ENCODE measurements at regions of chr17 and their contacts with region 1.

Region 1: DNA sequence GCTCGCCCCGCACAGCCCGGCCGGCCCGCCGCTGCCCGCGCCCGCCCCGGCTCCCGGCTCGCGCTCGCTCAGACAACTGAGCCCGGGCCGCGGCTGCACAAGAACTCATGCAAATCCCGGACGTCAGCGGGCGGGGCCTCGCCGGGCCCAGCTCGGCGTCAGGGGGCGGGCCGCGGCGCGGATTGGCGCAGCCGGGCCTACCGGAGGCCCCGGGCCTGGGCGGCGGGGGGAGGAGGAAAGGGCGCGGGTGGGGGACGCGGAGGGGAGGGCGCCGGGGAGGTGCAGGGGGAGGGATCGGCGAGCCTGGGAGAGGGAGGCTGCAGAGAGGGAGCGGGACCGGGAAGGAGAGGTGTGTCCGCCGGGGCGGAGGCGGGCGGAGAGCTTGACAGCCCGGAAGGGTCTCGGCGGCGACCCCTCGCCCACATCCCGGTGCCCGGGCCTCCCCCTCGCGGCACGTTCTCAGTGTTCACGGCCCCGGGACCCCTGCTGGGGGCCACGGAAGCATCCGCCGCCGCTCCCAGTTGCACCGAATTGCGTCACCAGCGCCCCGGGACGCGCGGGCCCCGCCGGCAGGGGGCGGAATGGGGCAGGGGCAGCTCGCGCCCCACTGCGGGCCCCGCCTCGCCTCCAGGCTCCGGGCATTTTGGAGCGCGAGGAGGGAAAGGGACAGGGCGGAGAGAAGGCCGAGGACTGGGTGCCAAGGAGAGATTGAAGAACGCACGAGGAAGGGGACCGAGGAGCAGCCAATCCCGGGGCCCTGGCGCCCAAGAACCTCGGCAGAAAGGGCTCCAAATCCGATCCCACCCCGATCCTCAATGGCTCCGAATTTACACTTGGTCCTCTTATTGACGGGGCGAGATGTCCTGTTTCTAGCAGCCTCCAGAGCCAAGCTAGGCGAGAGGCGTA is at the start of gene CBX4:
- DNase-seq: peak; percentile 82 to 94 (median 88)
- H3K4me3 ChIP-seq: peak within 1 kb of the TSS; percentile 85
- H3K4me3 Mint-ChIP-seq: peak within 1 kb of the TSS; percentile 94 to 100 (median 97)
- H3K27ac ChIP-seq: peak within 1 kb of the TSS; percentile 89
- H3K27ac Mint-ChIP-seq: peak within 1 kb of the TSS; percentile 88 to 100 (median 96)
- H3K4me1 ChIP-seq: peaks cover 67% of the 10 kb centered on the region
- H3K4me1 Mint-ChIP-seq: peaks cover 32 to 71% (median 40%) of the 10 kb centered on the region in 3 donors
- H3K27me3 ChIP-seq: peaks cover 44% of the 10 kb centered on the region
- H3K27me3 Mint-ChIP-seq: peaks cover 33 to 35% of the 10 kb centered on the region in 2 donors
- total RNA-seq, gene CBX4: 9.8 to 12.2 TPM

Region 2: DNA sequence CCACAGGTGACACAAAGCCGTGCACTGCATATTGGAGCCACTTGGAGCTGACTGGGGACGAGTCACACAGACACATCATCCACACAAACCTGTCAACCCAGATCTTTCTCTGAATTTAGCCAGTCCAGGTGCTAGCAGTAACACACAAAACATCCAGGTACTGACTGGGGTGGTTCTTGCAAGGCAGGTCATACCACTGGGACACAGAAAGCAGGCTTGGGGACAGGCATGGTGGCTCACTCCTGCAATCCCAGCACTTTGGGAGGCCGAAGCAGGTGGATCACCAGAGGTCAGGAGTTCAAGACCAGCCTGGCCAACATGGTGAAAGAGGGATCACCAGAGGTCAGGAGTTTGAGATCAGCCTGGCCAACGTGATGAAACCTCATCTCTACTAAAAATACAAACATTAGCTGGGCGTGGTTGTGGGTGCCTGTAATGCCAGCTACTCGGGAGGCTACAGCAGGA is 93.9 kb before region 1 on chr17:
- CTCF ChIA-PET with region 1: interaction called, 8 read pairs
- POLR2A ChIA-PET with region 1: interaction called, 13 read pairs
- DNase-seq: peak in 1 of 5 donors; percentile 22
- H3K4me3 ChIP-seq: no peak overlapping the region
- H3K4me3 Mint-ChIP-seq: peak overlapping the region in 6 of 7 donors; percentile 13 to 57 (median 53)
- H3K27ac ChIP-seq: no peak overlapping the region
- H3K27ac Mint-ChIP-seq: peak overlapping the region in 2 of 8 donors; percentile 11 to 60
- H3K4me1 ChIP-seq: peaks cover 23% of the 10 kb centered on the region
- H3K4me1 Mint-ChIP-seq: peaks cover 6 to 22% (median 12%) of the 10 kb centered on the region in 3 donors
- H3K27me3 ChIP-seq: peaks cover 15% of the 10 kb centered on the region
- H3K27me3 Mint-ChIP-seq: peaks cover 38 to 41% of the 10 kb centered on the region in 2 donors

Region 3: DNA sequence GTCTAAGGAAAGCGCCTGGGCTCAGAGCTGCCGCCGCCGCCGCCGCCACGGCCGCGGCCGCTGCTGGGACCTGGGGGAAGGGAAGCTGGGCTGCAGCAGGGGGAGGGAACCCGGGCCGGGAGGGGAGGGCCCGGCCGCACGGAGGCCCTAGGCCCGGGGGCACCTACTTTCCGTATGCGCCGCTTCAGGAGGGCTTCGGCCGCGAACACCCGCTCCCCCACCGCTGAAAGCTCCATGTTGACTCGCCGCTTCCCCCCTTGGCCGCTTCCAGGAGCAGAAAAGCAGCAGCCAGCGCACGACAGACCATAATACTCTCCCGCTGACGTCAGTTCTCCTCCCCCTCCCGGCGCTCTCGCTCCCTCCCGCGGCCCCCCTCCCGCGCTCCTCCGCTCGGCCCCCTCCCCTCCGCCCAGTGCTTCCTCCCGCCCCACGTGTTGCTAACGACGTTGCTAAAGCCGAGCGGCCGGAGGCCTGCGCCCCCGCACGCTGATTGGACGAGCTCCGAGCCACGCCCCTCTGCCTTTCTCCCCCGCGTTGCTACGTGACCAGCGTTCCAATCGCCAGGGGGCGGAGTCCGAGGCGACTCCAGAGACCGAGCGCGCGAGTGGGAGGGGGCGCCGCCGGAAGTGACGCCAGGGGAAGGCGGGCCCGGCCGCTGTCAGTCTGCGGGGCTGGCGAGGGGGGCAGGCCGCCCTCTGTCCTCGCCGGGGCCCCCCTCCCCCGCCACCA is 42.7 kb before region 1 on chr17 and contains the start of gene CBX8:
- CTCF ChIA-PET with region 1: interaction called, 14 read pairs
- POLR2A ChIA-PET with region 1: interaction called, 79 read pairs
- DNase-seq: peak; percentile 97 to 99 (median 98)
- H3K4me3 ChIP-seq: peak within 1 kb of the TSS; percentile 80
- H3K4me3 Mint-ChIP-seq: peak within 1 kb of the TSS; percentile 85 to 92 (median 86)
- H3K27ac ChIP-seq: peak within 1 kb of the TSS; percentile 73
- H3K27ac Mint-ChIP-seq: peak within 1 kb of the TSS; percentile 50 to 94 (median 88)
- H3K4me1 ChIP-seq: peaks cover 50% of the 10 kb centered on the region
- H3K4me1 Mint-ChIP-seq: peaks cover 31 to 52% (median 34%) of the 10 kb centered on the region in 3 donors
- H3K27me3 ChIP-seq: peaks cover 44% of the 10 kb centered on the region
- H3K27me3 Mint-ChIP-seq: peaks cover 43 to 45% of the 10 kb centered on the region in 2 donors
- total RNA-seq, gene CBX8: 1.9 to 2.2 TPM

Region 4: DNA sequence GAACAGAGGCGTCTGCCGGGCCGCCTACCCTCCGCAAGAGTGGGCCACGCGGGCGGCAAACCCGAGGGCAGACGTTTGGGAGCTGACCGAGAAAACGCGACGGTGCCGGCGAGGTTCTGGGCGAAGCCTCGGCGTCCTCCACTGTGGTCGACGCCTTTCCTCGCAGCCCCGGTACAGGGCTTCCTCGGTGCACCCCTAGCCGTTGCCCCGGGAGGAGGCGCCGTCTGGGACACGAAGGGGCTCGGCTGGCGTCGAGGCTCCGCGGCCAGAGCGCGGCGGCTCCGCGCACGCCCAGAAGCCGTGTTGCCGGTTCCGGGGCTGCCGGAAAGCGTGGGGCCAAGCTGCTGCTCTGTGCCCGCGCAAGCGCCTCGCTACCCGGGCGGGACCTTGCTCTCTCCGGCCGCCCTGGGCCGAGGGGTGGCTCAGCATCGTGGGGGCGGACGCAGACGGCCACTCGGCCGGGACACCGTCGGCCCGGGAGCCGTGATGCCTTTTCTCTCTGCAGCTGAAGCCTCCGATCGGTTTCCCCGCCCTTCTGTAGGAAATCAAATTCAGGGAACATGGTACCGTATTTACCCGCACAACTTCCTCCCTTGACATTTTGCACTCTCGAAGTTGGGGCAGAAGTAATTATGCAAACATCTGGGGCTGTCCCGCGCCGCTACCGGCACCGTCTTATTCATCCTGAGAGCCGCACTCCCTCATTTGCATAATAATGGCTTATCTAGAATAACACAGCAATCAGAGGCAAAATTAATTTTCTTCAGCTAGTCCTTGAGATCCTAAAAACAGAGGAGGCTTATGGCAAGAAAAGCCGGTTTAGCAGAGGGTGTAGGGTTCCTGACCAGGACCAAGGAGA is 35.4 kb before region 1 on chr17:
- CTCF ChIA-PET with region 1: interaction called, 14 read pairs
- POLR2A ChIA-PET with region 1: interaction called, 79 read pairs
- DNase-seq: peak in 1 of 5 donors; percentile 42
- H3K4me3 ChIP-seq: no peak overlapping the region
- H3K4me3 Mint-ChIP-seq: peak overlapping the region; percentile 42 to 75 (median 62)
- H3K27ac ChIP-seq: no peak overlapping the region
- H3K27ac Mint-ChIP-seq: peak overlapping the region in 6 of 8 donors; percentile 40 to 93 (median 60)
- H3K4me1 ChIP-seq: peaks cover 56% of the 10 kb centered on the region
- H3K4me1 Mint-ChIP-seq: peaks cover 26 to 50% (median 32%) of the 10 kb centered on the region in 3 donors
- H3K27me3 ChIP-seq: peaks cover 99% of the 10 kb centered on the region
- H3K27me3 Mint-ChIP-seq: peaks cover 77 to 85% of the 10 kb centered on the region in 2 donors

Region 5: DNA sequence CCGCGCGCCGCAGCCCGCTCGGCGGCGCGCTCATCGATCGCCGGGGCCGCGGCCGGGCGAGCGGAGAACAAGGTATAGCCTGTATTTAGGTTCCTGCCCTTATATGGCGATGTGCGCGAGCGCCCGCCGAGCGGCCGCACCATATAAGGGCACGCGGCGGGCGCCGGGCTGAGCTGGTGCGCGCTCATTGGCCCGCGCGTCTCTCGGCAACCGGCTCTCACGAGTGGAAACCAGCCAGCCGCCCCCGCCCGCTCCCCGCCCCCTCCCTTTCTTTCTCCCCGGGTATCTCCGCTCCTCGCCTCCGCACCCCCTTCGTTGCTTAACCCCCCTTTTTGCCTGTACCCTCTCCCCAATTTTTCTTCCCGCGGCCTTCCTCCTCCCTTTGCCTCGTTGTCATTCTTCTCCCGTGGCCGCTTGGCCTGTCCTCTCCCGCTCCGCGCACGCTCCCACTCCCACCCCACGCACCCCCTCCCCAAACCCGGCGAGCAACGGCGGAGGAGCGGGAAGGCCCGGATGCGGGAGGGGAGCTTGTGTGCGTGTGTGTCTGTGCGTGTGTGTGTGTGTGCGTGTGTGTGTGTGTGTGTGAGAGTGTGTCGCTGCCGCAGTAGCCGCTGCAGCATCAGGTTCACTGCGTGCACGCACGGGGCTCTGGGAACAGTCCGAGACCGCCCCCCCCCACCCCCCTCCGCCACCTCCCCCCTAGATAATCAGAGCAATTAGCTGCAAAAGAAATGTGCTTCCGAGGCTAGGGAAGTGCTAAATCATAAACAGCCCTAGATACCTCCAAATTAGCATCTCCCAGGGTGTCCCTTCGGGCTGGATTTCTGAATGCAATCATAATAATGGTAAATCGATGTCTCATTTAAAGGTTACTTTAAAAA is 29.2 kb before region 1 on chr17:
- CTCF ChIA-PET with region 1: interaction called, 23 read pairs
- POLR2A ChIA-PET with region 1: interaction called, 41 read pairs
- DNase-seq: peak; percentile 69 to 85 (median 76)
- H3K4me3 ChIP-seq: no peak overlapping the region
- H3K4me3 Mint-ChIP-seq: peak overlapping the region in 4 of 7 donors; percentile 44 to 83 (median 50)
- H3K27ac ChIP-seq: no peak overlapping the region
- H3K27ac Mint-ChIP-seq: peak overlapping the region in 3 of 8 donors; percentile 21 to 93 (median 66)
- H3K4me1 ChIP-seq: peaks cover 37% of the 10 kb centered on the region
- H3K4me1 Mint-ChIP-seq: peaks cover 21 to 34% (median 30%) of the 10 kb centered on the region in 3 donors
- H3K27me3 ChIP-seq: peaks cover 76% of the 10 kb centered on the region
- H3K27me3 Mint-ChIP-seq: peaks cover 58 to 64% of the 10 kb centered on the region in 2 donors

Region 6: DNA sequence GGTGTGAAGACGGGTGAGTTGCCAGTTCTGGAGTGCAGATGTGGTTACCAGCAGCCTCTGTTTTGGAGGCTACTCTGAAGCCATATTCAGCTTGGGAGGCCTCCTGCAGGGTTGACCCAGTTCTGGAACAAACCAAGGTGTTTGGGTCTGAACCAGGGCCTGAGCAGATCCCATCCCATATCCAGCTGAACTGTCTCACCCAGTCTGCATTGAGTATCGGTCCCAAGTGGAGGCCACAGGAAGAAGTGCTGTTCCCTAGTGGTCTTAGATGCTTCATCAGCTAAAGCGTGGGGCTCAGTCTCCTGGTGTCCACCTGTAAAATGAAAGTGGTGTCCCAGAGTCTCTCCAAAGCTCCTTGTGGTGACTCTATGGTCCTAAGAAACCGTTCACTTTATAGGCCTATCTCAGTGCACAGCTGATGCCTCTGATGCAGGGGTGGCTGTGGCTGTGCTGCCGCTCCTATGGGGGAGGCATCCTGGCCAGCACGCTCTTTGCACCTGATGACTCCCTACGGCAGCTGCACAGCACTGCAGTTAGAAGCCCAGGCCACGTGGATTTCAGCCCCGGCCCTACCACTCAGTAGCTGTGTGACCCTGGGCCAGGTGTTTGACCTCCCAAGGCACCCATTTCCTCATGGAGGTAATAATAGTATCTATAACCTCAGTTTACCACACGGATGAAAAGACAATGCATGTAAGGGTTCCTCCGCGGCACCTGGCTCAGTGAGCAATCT is 21.4 kb before region 1 on chr17:
- CTCF ChIA-PET with region 1: interaction called, 15 read pairs
- POLR2A ChIA-PET with region 1: interaction called, 41 read pairs
- DNase-seq: no peak
- H3K4me3 ChIP-seq: no peak overlapping the region
- H3K4me3 Mint-ChIP-seq: peak overlapping the region in 2 of 7 donors; percentile 73 to 80
- H3K27ac ChIP-seq: no peak overlapping the region
- H3K27ac Mint-ChIP-seq: no peak overlapping the region
- H3K4me1 ChIP-seq: peaks cover 11% of the 10 kb centered on the region
- H3K4me1 Mint-ChIP-seq: peaks cover 6 to 12% (median 11%) of the 10 kb centered on the region in 3 donors
- H3K27me3 ChIP-seq: peaks cover 26% of the 10 kb centered on the region
- H3K27me3 Mint-ChIP-seq: peaks cover 23 to 25% of the 10 kb centered on the region in 2 donors

Region 7: DNA sequence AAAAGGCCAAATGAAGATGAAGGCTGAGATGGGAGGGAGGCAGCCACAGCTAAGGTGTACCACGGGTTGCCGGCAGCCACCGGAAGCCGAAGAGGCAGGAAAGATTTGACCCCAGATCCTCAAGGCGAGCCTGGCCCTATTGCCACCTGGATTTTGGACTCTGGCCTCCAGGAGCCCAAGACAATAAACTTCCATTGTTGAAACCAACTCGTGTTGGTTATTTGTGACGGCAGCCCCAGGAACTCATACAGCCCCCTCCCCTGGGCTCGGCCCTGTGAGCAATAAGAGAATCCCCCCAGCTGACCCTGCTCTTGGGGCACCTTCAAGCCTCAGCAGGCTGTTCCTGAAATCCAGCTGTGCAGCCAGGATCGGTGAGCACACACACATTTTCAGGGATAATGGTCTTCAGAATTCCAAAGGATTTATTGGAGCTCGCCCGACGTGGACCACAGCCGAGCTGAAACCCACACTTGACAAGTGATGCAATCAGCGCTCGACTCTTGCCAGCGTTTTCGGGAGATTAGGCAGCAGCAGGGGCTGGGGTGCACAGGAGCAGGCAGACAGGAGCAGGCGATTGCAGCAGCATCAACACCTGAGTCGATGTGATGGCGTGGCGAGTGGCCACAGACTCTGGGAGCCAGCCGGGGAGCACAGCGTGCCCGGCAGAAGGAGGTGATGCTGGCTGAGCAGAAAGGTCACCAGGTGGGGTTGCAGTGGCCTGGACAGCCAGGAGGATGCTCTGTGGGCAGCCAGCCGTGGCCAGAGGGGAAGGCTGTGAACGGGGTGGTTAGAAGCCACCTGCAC is 22.0 kb after region 1 on chr17:
- CTCF ChIA-PET with region 1: no interaction called
- POLR2A ChIA-PET with region 1: no interaction called
- DNase-seq: no peak
- H3K4me3 ChIP-seq: no peak overlapping the region
- H3K4me3 Mint-ChIP-seq: no peak overlapping the region
- H3K27ac ChIP-seq: no peak overlapping the region
- H3K27ac Mint-ChIP-seq: no peak overlapping the region
- H3K4me1 ChIP-seq: no peaks in the 10 kb centered on the region
- H3K4me1 Mint-ChIP-seq: no peaks in the 10 kb centered on the region
- H3K27me3 ChIP-seq: no peaks in the 10 kb centered on the region
- H3K27me3 Mint-ChIP-seq: peaks cover 12 to 68% of the 10 kb centered on the region in 2 donors

Measured in CD8-positive, alpha-beta memory T cell (primary cell).